ENCODE measurements at regions of chr1 and their contacts with region 1.

Region 1: GRCh38 chr1:159132271-159132881 is 39.0 kb upstream of the CADM3 start:
- DNase-seq: peak; percentile 26
- H3K4me3 ChIP-seq: no peak overlapping the region
- H3K27ac ChIP-seq: no peak overlapping the region
- H3K27me3 ChIP-seq: peaks cover 3% of the 10 kb centered on the region
- CTCF ChIP-seq: peak; percentile 87

Region 2: DNA sequence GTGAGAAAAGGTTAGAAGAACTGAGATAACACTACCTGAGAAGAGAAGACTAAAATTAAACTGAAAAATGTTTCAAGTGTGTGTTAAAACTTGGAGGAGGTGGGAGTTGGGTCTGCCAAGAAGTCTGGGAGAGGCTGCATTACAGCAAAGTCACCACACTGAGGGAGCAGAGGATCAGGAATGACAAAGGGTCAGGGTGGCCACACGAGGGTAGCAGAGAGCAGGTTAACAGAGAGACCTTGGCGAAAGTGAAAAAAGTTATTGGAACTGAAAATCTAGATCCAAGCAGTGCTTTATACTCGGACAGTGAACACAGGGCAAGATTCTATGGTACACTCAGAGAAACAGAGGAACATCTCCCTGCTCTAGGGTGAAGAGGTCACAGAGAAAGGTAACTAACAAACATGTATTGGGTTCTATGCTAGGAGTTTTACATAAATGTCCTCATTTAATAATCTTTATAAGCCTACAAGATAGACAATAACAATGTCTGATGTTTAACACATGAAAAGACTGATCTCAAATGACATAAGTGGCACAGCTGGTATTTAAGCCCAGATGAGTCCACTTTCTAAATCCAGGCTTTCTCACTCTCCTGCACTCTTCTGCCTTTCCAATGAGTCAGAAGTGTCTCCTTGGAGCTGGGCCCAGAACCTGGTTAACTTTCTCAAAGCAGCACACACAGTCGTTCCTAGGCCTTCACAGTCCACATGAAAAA is 28.8 kb after region 1 on chr1:
- CTCF ChIA-PET with region 1: interaction called, 12 read pairs
- POLR2A ChIA-PET with region 1: no interaction called
- DNase-seq: peak; percentile 56
- H3K4me3 ChIP-seq: no peak overlapping the region
- H3K27ac ChIP-seq: no peak overlapping the region
- H3K27me3 ChIP-seq: no peaks in the 10 kb centered on the region
- CTCF ChIP-seq: peak; percentile 99

Region 3: GRCh38 chr1:159197561-159198557 is 65.5 kb after region 1 on chr1:
- CTCF ChIA-PET with region 1: interaction called, 55 read pairs
- POLR2A ChIA-PET with region 1: no interaction called
- DNase-seq: peak; percentile 26
- H3K4me3 ChIP-seq: no peak overlapping the region
- H3K27ac ChIP-seq: no peak overlapping the region
- H3K27me3 ChIP-seq: no peaks in the 10 kb centered on the region
- CTCF ChIP-seq: peak; percentile 98

Region 4: GRCh38 chr1:159307346-159308020 is 175.1 kb after region 1 on chr1:
- CTCF ChIA-PET with region 1: no interaction called
- POLR2A ChIA-PET with region 1: no interaction called
- DNase-seq: no peak
- H3K4me3 ChIP-seq: no peak overlapping the region
- H3K27ac ChIP-seq: no peak overlapping the region
- H3K27me3 ChIP-seq: no peaks in the 10 kb centered on the region
- CTCF ChIP-seq: no peak

Measured in AG04450 (cell line).